Activated CD4-positive, alpha-beta T cell treated with anti-CD3 and anti-CD28 coated beads, Interleukin-2, amount 10 ng/mL, durations not matched to agents 24 days and 14 days (primary cell): ENCODE measurements at regions of chr4 and their contacts with region 1.

Region 1: DNA sequence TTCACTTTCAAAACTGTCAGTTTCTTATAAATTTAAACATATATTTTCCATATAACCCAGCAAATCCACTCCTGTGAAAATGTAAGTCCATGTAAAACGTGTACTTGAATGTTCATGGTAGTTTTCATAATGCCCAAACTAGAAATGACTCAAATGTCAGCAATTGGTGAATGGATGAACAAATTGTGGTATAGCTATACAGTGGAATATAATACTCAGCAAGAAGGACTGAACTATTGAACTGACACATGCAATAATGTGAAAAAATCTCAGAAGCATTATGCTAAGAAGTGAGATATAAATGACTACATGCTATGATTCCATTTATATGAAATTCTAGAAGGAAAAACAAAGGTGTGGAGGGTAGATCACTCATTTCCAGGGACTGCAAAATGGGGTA is 52.2 kb downstream of the USP53 start:
- DNase-seq: no peak
- H3K4me3 Mint-ChIP-seq: no peak overlapping the region
- H3K27ac Mint-ChIP-seq: no peak overlapping the region
- H3K4me1 Mint-ChIP-seq: peaks cover 11% of the 10 kb centered on the region
- H3K27me3 Mint-ChIP-seq: no peaks in the 10 kb centered on the region

Region 2: DNA sequence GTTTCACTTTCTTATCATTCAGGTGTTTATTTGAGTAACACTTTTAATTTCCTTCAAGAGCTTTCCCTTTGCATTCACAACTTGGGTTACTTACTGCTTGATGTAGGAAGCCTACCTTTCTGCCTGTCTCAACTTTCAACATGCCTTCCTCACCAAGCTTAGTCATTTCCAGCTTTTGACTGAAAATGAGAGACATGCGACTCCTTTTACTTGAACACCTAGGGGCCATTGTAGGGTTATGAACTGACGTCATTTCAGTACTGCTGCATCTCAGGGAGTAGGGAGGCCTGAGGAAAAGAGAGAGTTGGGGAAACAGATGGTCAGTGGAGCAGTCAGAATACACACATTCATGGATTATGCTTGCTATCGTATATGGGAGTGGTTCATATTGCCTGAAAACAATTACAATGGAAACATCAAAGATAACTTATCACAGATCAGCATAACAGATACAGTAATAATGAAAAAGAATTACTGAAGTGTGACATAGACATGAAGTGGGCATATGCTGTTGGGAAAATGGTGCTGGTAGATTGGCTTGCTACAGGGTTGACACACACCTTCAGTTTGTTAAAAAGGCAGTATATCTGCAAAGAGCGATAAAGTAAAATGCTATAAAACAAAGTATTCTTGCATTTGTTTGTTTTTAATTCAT is 26.5 kb before region 1 on chr4:
- intact Hi-C with region 1: loop called (anchors 1 kb)
- DNase-seq: peak; percentile 78
- H3K4me3 Mint-ChIP-seq: peak overlapping the region; percentile 4
- H3K27ac Mint-ChIP-seq: peak overlapping the region; percentile 78
- H3K4me1 Mint-ChIP-seq: peaks cover 23% of the 10 kb centered on the region
- H3K27me3 Mint-ChIP-seq: no peaks in the 10 kb centered on the region